ENCODE measurements at regions of chr7 and their contacts with region 1.

Region 1: GRCh38 chr7:1028031-1028770 is 16.1 kb upstream of the GPR146 start:
- DNase-seq: peak; percentile 89
- H3K4me3 ChIP-seq: peak overlapping the region; percentile 85
- H3K27ac ChIP-seq: peak overlapping the region; percentile 95
- H3K4me1 ChIP-seq: peaks cover 69% of the 10 kb centered on the region
- CTCF ChIP-seq: no peak

Region 2: DNA sequence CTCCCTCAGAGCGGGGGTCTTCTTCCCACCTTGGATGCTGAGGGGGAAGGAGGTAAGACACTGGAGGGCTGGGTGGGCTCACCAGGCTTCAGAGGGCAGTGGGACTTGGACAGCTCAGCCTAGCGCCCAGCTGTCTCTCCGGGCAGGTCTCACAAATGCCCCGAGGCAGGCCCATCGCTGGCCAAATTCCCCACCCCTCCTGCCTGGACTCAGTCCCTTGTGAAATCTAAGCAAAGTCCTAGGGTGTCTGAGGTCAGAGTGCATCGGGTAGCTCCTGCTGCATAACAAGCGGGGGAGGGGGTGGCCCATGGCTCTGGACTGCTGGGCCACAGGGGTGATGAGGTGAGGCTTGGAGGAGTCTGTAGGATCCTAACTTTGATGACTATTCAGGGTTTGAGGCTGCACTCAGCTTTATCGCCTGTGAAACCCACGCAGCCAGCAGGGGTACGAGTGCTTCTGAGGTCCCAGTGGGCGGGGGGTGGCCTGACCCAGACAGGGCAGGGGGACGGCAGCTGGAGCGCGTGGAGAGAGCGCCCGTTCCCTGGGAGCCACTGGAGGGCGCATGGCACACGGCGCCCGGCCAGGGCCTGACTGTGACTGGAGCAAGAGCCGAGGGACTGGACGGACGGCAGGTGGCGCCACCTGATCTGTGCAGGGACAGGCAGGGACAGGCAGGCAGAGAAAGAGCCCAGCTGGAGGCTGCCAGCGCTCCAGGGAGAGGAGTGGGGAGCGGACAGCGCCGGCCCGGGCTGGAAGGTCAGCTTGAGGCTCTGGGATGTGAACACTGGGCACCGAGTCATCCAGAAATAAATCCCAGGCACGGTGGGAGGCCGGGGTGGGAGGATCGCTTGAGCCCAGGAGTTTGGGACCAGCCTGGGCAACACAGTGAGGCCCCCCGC is 35.2 kb before region 1 on chr7:
- CTCF ChIA-PET with region 1: interaction called, 12 read pairs
- POLR2A ChIA-PET with region 1: interaction called, 4 read pairs
- intact Hi-C with region 1: loop called (anchors 1 kb)
- DNase-seq: peak; percentile 95
- H3K4me3 ChIP-seq: no peak overlapping the region
- H3K27ac ChIP-seq: no peak overlapping the region
- H3K4me1 ChIP-seq: peaks cover 43% of the 10 kb centered on the region
- CTCF ChIP-seq: peak; percentile 99

Region 3: GRCh38 chr7:1059200-1060091 is 31.2 kb after region 1 on chr7:
- CTCF ChIA-PET with region 1: interaction called, 4 read pairs
- POLR2A ChIA-PET with region 1: interaction called, 5 read pairs
- intact Hi-C with region 1: loop called (anchors 1 kb)
- DNase-seq: peak; percentile 91
- H3K4me3 ChIP-seq: peak overlapping the region; percentile 48
- H3K27ac ChIP-seq: peak overlapping the region; percentile 89
- H3K4me1 ChIP-seq: peaks cover 71% of the 10 kb centered on the region
- CTCF ChIP-seq: no peak

Region 4: GRCh38 chr7:1151653-1152425 is 123.6 kb after region 1 on chr7:
- CTCF ChIA-PET with region 1: no interaction called
- POLR2A ChIA-PET with region 1: no interaction called
- intact Hi-C with region 1: loop called (anchors 5 kb)
- DNase-seq: peak; percentile 43
- H3K4me3 ChIP-seq: no peak overlapping the region
- H3K27ac ChIP-seq: peak overlapping the region; percentile 90
- H3K4me1 ChIP-seq: peaks cover 62% of the 10 kb centered on the region
- CTCF ChIP-seq: no peak

Measured in OCI-LY7 (cell line).